ENCODE measurements at regions of chr17 and their contacts with region 1.

Region 1: GRCh38 chr17:73820686-73821448 is 176.6 kb upstream of the SDK2 start:
- DNase-seq: no peak
- ATAC-seq: peak in 2 of 3 donors; percentile 21 to 62
- H3K4me3 ChIP-seq: no peak overlapping the region
- H3K4me3 Mint-ChIP-seq: peak overlapping the region; percentile 54
- H3K27ac ChIP-seq: no peak overlapping the region
- H3K27ac Mint-ChIP-seq: peak overlapping the region in 1 of 2 donors; percentile 68
- H3K4me1 ChIP-seq: peaks cover 29% of the 10 kb centered on the region
- H3K4me1 Mint-ChIP-seq: peaks cover 12 to 48% of the 10 kb centered on the region in 2 donors
- H3K27me3 ChIP-seq: no peaks in the 10 kb centered on the region
- H3K27me3 Mint-ChIP-seq: peaks cover 0 to 6% of the 10 kb centered on the region in 2 donors
- CTCF ChIP-seq: peak; percentile 7

Region 2: GRCh38 chr17:73956669-73957465 is 136.0 kb after region 1 on chr17:
- intact Hi-C with region 1: loop called (anchors 5 kb)
- DNase-seq: peak; percentile 58 to 71
- ATAC-seq: peak; percentile 62 to 72 (median 67)
- H3K4me3 ChIP-seq: no peak overlapping the region
- H3K4me3 Mint-ChIP-seq: no peak overlapping the region
- H3K27ac ChIP-seq: no peak overlapping the region
- H3K27ac Mint-ChIP-seq: no peak overlapping the region
- H3K4me1 ChIP-seq: peaks cover 13% of the 10 kb centered on the region
- H3K4me1 Mint-ChIP-seq: no peaks in the 10 kb centered on the region
- H3K27me3 ChIP-seq: peaks cover 7% of the 10 kb centered on the region
- H3K27me3 Mint-ChIP-seq: no peaks in the 10 kb centered on the region
- CTCF ChIP-seq: peak; percentile 67

Region 3: GRCh38 chr17:73998653-73999645 is 178.1 kb after region 1 on chr17:
- intact Hi-C with region 1: loop called (anchors 1 kb)
- DNase-seq: peak; percentile 54 to 72
- ATAC-seq: peak; percentile 78 to 88 (median 80)
- H3K4me3 ChIP-seq: no peak overlapping the region
- H3K4me3 Mint-ChIP-seq: no peak overlapping the region
- H3K27ac ChIP-seq: no peak overlapping the region
- H3K27ac Mint-ChIP-seq: no peak overlapping the region
- H3K4me1 ChIP-seq: no peaks in the 10 kb centered on the region
- H3K4me1 Mint-ChIP-seq: peaks cover 0 to 5% of the 10 kb centered on the region in 2 donors
- H3K27me3 ChIP-seq: no peaks in the 10 kb centered on the region
- H3K27me3 Mint-ChIP-seq: peaks cover 13 to 29% of the 10 kb centered on the region in 2 donors
- CTCF ChIP-seq: peak; percentile 76